PC-9 (cell line): ENCODE measurements at regions of chr3 and their contacts with region 1.

Region 1: GRCh38 chr3:61650276-61650675 is 88.9 kb downstream of the PTPRG start:
- DNase-seq: no peak
- H3K4me3 ChIP-seq: no peak overlapping the region
- H3K27ac ChIP-seq: no peak overlapping the region
- H3K4me1 ChIP-seq: no peaks in the 10 kb centered on the region
- H3K27me3 ChIP-seq: no peaks in the 10 kb centered on the region
- CTCF ChIP-seq: no peak

Region 2: GRCh38 chr3:61381745-61382392 is 268.4 kb before region 1 on chr3:
- CTCF ChIA-PET with region 1: no interaction called
- POLR2A ChIA-PET with region 1: no interaction called
- intact Hi-C with region 1: no loop called
- DNase-seq: peak in 1 of 2 experiments; percentile 39
- H3K4me3 ChIP-seq: no peak overlapping the region
- H3K27ac ChIP-seq: no peak overlapping the region
- H3K4me1 ChIP-seq: no peaks in the 10 kb centered on the region
- H3K27me3 ChIP-seq: no peaks in the 10 kb centered on the region
- CTCF ChIP-seq: peak; percentile 69

Region 3: GRCh38 chr3:61681636-61682035 is 31.4 kb after region 1 on chr3:
- CTCF ChIA-PET with region 1: interaction called, 13 read pairs
- POLR2A ChIA-PET with region 1: no interaction called
- intact Hi-C with region 1: no loop called
- DNase-seq: no peak
- H3K4me3 ChIP-seq: no peak overlapping the region
- H3K27ac ChIP-seq: no peak overlapping the region
- H3K4me1 ChIP-seq: peaks cover 17% of the 10 kb centered on the region; the same call in 1 of the 2 replicates
- H3K27me3 ChIP-seq: no peaks in the 10 kb centered on the region
- CTCF ChIP-seq: no peak